Caco-2 (cell line): ENCODE measurements at regions of chr10 and their contacts with region 1.

Region 1: DNA sequence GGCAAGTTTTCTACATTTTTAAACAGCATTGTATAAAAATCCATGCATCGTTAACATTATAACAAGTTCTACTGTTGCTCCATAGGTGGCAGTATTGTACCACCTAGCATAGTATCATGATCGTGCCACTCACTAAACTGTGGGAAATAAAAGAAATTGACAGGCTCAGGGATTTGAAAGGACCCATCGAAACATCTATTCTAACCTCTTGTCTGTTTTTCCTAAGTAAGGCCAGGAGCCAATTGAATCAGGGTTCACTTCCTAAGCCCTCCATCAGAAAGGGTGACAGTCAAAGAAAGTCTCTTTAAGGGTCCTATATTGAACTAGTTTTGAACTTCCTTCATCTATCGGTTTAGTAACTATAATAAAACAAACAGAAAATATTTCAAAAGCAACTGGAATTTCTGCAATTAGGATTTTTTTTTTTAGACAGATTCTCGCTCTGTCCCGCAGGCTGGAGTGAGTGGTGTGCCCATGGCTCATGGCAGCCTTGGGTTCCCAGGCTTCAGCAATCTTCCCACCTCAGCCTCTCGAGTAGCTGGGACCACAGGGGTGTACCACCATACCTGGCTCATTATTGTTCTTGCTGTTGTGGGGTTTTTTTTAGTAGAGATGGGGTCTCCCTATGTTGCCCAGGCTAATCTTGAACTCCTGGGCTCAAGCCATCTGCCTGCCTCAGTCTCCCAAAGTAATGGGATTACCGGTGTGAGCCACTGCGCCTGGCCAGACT is 9.4 kb downstream of the HACD1 start:
- DNase-seq: peak in 1 of 2 experiments; percentile 65
- H3K4me3 ChIP-seq: no peak overlapping the region
- H3K4me3 Mint-ChIP-seq: no peak overlapping the region
- H3K27ac Mint-ChIP-seq: no peak overlapping the region
- H3K4me1 ChIP-seq: no peaks in the 10 kb centered on the region
- H3K4me1 Mint-ChIP-seq: peaks cover 7% of the 10 kb centered on the region
- H3K27me3 ChIP-seq: no peaks in the 10 kb centered on the region
- H3K27me3 Mint-ChIP-seq: no peaks in the 10 kb centered on the region
- CTCF ChIP-seq: peak; percentile 88 to 89

Region 2: GRCh38 chr10:17742918-17743317 is 135.2 kb after region 1 on chr10:
- CTCF ChIA-PET with region 1: interaction called, 4 read pairs
- POLR2A ChIA-PET with region 1: no interaction called
- intact Hi-C with region 1: loop called (anchors 1 kb)
- DNase-seq: peak; percentile 64 to 77
- H3K4me3 ChIP-seq: no peak overlapping the region
- H3K4me3 Mint-ChIP-seq: no peak overlapping the region
- H3K27ac Mint-ChIP-seq: no peak overlapping the region
- H3K4me1 ChIP-seq: no peaks in the 10 kb centered on the region
- H3K4me1 Mint-ChIP-seq: peaks cover 7% of the 10 kb centered on the region
- H3K27me3 ChIP-seq: no peaks in the 10 kb centered on the region
- H3K27me3 Mint-ChIP-seq: no peaks in the 10 kb centered on the region
- CTCF ChIP-seq: peak; percentile 90 to 93

Region 3: GRCh38 chr10:17882557-17882956 is 274.8 kb after region 1 on chr10:
- CTCF ChIA-PET with region 1: no interaction called
- POLR2A ChIA-PET with region 1: no interaction called
- intact Hi-C with region 1: no loop called
- DNase-seq: no peak
- H3K4me3 ChIP-seq: no peak overlapping the region
- H3K4me3 Mint-ChIP-seq: no peak overlapping the region
- H3K27ac Mint-ChIP-seq: no peak overlapping the region
- H3K4me1 ChIP-seq: no peaks in the 10 kb centered on the region
- H3K4me1 Mint-ChIP-seq: no peaks in the 10 kb centered on the region
- H3K27me3 ChIP-seq: no peaks in the 10 kb centered on the region
- H3K27me3 Mint-ChIP-seq: peaks cover 4% of the 10 kb centered on the region
- CTCF ChIP-seq: no peak

Region 4: GRCh38 chr10:18104223-18104872 is 496.6 kb after region 1 on chr10:
- CTCF ChIA-PET with region 1: no interaction called
- POLR2A ChIA-PET with region 1: no interaction called
- intact Hi-C with region 1: loop called (anchors 1 kb)
- DNase-seq: peak; percentile 49 to 65
- H3K4me3 ChIP-seq: no peak overlapping the region
- H3K4me3 Mint-ChIP-seq: no peak overlapping the region
- H3K27ac Mint-ChIP-seq: no peak overlapping the region
- H3K4me1 ChIP-seq: no peaks in the 10 kb centered on the region
- H3K4me1 Mint-ChIP-seq: no peaks in the 10 kb centered on the region
- H3K27me3 ChIP-seq: no peaks in the 10 kb centered on the region
- H3K27me3 Mint-ChIP-seq: peaks cover 14% of the 10 kb centered on the region
- CTCF ChIP-seq: peak; percentile 86 to 90